Activated T-helper 1 cell treated with anti-CD3 and anti-CD28 coated beads, Interleukin-12 subunit alpha, Interleukin-12 subunit beta, Interleukin-2, Interleukin-4 antibody, amounts not matched to agents 30 ng/mL and 10 ng/mL and 1 ng/mL, durations not matched to agents 14 hours and 24 hours and 36 hours (primary cell): ENCODE measurements at regions of chr9 and their contacts with region 1.

Region 1: GRCh38 chr9:20558566-20559016 is 63.7 kb downstream of the MLLT3 start:
- DNase-seq: peak; percentile 18
- H3K4me3 Mint-ChIP-seq: peak overlapping the region; percentile 20
- H3K27ac Mint-ChIP-seq: peak overlapping the region; percentile 47
- H3K4me1 Mint-ChIP-seq: peaks cover 83% of the 10 kb centered on the region
- H3K27me3 Mint-ChIP-seq: no peaks in the 10 kb centered on the region

Region 2: DNA sequence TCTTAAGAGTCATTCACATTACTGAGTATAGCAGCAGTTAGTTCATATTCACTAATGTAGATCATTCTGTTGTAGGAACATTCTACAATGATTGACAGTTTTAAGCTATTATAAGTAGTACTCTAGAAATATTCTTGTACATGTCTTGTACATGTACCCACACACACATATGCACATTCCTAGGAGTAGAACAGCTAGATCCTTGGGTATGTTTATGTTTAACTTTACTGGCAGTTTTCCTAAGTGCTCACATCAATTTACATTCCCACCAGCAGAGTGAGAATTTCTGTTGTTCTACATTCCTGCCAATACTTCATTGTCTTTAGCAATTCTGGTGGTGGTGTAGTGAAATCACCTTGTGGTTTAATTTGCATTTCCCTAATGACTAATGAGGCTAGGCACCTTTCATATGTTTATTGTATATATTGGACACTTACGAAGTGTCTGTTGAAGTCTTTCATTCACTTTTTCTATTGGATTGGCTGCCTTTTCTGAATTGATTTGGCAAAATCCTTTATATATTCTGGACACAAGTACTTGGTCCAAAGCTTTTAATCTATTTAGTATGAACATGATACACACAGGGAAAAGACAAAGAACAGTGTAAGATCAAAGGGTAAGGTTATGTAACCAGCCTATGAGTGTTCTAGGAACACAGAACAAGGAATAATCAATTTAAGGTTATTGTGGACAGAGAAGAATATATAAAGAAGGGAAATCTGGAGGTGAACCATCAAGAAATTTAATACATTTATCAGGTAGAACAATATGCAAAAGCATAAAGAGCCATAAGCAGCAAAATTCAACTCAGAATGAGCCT is 31.9 kb before region 1 on chr9:
- intact Hi-C with region 1: loop called (anchors 5 kb)
- DNase-seq: no peak
- H3K4me3 Mint-ChIP-seq: no peak overlapping the region
- H3K27ac Mint-ChIP-seq: no peak overlapping the region
- H3K4me1 Mint-ChIP-seq: peaks cover 85% of the 10 kb centered on the region
- H3K27me3 Mint-ChIP-seq: no peaks in the 10 kb centered on the region

Region 3: DNA sequence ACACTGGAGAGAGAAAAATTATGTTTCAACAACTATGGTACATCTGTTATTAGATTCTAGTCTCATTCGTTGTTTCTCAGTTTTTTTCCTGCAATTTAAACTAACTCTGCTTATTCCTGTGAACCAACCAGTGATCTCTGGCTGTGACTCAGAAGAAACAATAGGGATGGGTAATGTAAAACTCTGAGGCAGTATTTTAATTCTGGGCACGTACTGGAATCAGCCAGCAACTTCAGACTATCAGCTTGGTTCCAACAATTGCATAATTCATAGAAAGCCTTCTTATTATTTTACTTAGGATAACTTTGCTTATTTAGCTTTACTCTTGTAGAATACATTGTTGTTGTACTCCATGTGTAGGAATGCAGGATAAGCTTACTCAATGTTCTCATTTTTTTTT is 35.0 kb after region 1 on chr9:
- intact Hi-C with region 1: no loop called
- DNase-seq: no peak
- H3K4me3 Mint-ChIP-seq: no peak overlapping the region
- H3K27ac Mint-ChIP-seq: no peak overlapping the region
- H3K4me1 Mint-ChIP-seq: peaks cover 39% of the 10 kb centered on the region
- H3K27me3 Mint-ChIP-seq: no peaks in the 10 kb centered on the region

Region 4: DNA sequence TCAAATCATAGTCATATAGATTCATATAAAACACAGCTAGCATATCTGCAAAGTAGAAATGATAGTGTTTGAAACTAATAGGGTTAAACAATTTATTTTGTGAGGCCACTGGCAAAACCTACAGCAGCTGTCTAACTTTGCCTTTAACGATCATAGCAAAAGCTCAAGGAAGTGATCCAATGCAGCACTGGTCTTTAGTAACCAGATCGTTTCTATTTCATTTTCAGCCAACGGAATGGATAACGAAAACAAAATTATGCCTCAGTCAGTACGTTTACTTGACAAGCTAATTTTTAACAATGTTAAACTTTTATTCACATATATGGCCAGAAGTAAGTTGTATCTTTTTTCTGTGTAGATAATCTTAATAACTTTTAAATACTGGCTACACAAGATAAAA is 46.0 kb after region 1 on chr9:
- intact Hi-C with region 1: loop called (anchors 2 kb)
- DNase-seq: no peak
- H3K4me3 Mint-ChIP-seq: peak overlapping the region; percentile 67
- H3K27ac Mint-ChIP-seq: peak overlapping the region; percentile 49
- H3K4me1 Mint-ChIP-seq: peaks cover 71% of the 10 kb centered on the region
- H3K27me3 Mint-ChIP-seq: no peaks in the 10 kb centered on the region

Region 5: GRCh38 chr9:20658677-20659473 is 100.3 kb after region 1 on chr9:
- intact Hi-C with region 1: no loop called
- DNase-seq: no peak
- H3K4me3 Mint-ChIP-seq: no peak overlapping the region
- H3K27ac Mint-ChIP-seq: peak overlapping the region; percentile 71
- H3K4me1 Mint-ChIP-seq: no peaks in the 10 kb centered on the region
- H3K27me3 Mint-ChIP-seq: peaks cover 3% of the 10 kb centered on the region

Region 6: DNA sequence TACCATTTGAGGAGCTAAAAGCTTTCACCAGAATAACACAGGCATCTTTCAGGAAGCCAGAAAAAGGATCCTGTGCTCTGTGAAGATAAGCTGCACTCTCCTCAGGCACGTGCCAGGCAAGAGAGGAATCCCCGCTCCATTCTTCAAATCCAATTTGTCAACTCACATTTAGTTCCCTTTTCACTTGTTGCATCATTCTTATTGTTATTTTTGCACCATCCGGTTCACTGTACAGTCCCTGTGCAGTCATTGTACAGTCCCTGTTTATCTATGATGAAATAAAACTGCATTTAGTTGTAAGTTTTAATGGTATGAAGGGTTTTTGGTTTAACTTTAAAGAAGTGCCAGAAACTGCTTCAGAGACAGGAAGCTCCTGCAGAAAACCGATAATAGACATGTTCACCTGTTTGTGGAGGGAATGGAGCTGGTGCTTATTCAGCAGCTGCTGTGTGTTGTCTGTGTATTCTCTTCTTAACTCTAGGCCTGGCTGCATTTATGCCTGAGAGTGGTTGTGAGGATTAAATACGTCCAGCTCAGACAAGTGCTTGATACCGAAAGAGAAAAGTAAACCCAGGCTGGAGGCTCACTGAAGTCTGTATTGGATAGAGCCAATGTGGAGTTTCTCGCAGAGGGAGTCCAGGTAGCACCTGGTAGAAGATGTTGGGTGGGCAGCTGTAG is 560.6 kb after region 1 on chr9:
- intact Hi-C with region 1: no loop called
- DNase-seq: no peak
- H3K4me3 Mint-ChIP-seq: no peak overlapping the region
- H3K27ac Mint-ChIP-seq: no peak overlapping the region
- H3K4me1 Mint-ChIP-seq: peaks cover 5% of the 10 kb centered on the region
- H3K27me3 Mint-ChIP-seq: peaks cover 34% of the 10 kb centered on the region